Activated T-helper 1 cell treated with anti-CD3 and anti-CD28 coated beads, Interleukin-12 subunit alpha, Interleukin-12 subunit beta, Interleukin-2, Interleukin-4 antibody, amounts not matched to agents 30 ng/mL and 10 ng/mL and 1 ng/mL, durations not matched to agents 14 hours and 24 hours and 36 hours (primary cell): ENCODE measurements at regions of chr22 and their contacts with region 1.

Region 1: GRCh38 chr22:43993027-43993760 is 30.9 kb upstream of the PARVB start:
- DNase-seq: peak; percentile 43
- H3K4me3 Mint-ChIP-seq: no peak overlapping the region
- H3K27ac Mint-ChIP-seq: peak overlapping the region; percentile 61
- H3K4me1 Mint-ChIP-seq: peaks cover 27% of the 10 kb centered on the region
- H3K27me3 Mint-ChIP-seq: no peaks in the 10 kb centered on the region

Region 2: GRCh38 chr22:43919106-43919965 is 73.9 kb before region 1 on chr22:
- intact Hi-C with region 1: no loop called
- DNase-seq: no peak
- H3K4me3 Mint-ChIP-seq: no peak overlapping the region
- H3K27ac Mint-ChIP-seq: no peak overlapping the region
- H3K4me1 Mint-ChIP-seq: peaks cover 6% of the 10 kb centered on the region
- H3K27me3 Mint-ChIP-seq: peaks cover 11% of the 10 kb centered on the region

Region 3: GRCh38 chr22:44180706-44181032 is 187.5 kb after region 1 on chr22 and contains the start of gene PARVG:
- intact Hi-C with region 1: loop called (anchors 5 kb)
- DNase-seq: peak; percentile 33
- H3K4me3 Mint-ChIP-seq: peak within 1 kb of the TSS; percentile 81
- H3K27ac Mint-ChIP-seq: peak within 1 kb of the TSS; percentile 97
- H3K4me1 Mint-ChIP-seq: peaks cover 19% of the 10 kb centered on the region
- H3K27me3 Mint-ChIP-seq: peaks cover 9% of the 10 kb centered on the region
- total RNA-seq, gene PARVG: 50.6 and 52.8 TPM in 2 replicates

Region 4: GRCh38 chr22:44281768-44282637 is 288.8 kb after region 1 on chr22:
- intact Hi-C with region 1: no loop called
- DNase-seq: no peak
- H3K4me3 Mint-ChIP-seq: no peak overlapping the region
- H3K27ac Mint-ChIP-seq: no peak overlapping the region
- H3K4me1 Mint-ChIP-seq: no peaks in the 10 kb centered on the region
- H3K27me3 Mint-ChIP-seq: peaks cover 13% of the 10 kb centered on the region

Region 5: DNA sequence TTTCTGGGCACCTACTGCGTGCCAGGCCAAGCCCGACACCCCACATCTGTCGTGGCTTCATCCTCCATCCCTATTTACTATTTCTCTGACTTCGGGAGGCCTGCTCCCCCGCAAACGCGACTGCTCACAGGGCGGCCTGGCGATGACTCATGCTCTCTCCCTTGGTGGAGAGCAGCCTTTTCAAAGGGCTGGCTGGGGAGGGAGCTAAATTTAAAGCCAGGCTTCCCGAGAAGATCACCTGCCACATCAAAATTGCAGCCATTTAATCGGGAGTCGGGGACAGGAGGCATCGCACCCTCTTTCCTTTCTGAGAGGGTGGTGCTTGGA is 344.4 kb after region 1 on chr22:
- intact Hi-C with region 1: no loop called
- DNase-seq: no peak
- H3K4me3 Mint-ChIP-seq: no peak overlapping the region
- H3K27ac Mint-ChIP-seq: no peak overlapping the region
- H3K4me1 Mint-ChIP-seq: no peaks in the 10 kb centered on the region
- H3K27me3 Mint-ChIP-seq: peaks cover 4% of the 10 kb centered on the region

Region 6: DNA sequence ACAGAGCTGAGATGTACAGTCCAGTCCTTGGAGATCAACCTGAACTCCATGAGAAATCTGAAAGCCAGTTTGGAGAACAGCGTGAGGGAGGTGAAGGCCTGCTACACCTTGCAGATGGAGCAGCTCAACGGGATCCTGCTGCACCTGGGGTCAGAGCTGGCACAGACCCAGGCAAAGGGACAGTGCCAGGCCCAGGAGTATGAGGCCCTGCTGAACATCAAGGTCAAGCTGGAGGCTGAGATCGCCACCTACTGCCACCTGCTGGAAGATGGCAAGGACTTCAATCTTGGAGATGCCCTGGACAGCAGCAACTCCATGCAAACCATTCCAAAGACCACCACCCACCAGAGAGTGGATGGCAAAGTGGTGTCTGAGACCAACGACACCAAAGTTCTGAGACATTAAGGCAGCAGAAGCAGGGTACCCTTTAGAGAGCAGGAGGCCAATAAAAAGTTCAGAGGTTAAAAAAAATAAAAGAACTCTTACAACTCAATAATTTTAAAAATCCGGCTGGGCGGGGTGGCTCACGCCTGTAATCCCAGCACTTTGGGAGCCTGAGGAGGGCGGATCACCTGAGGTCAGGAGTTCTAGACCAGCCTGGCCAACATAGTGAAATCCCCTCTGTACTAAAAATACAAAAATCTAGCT is 574.8 kb after region 1 on chr22:
- intact Hi-C with region 1: loop called (anchors 5 kb)
- DNase-seq: peak; percentile 33
- H3K4me3 Mint-ChIP-seq: no peak overlapping the region
- H3K27ac Mint-ChIP-seq: no peak overlapping the region
- H3K4me1 Mint-ChIP-seq: no peaks in the 10 kb centered on the region
- H3K27me3 Mint-ChIP-seq: peaks cover 7% of the 10 kb centered on the region